Mammary epithelial cell (primary cell): ENCODE measurements at regions of chr3 and their contacts with region 1.

Region 1: GRCh38 chr3:33096093-33096868 is 665 bp downstream of the GLB1 start:
- DNase-seq: peak; percentile 48
- H3K4me3 ChIP-seq: peak overlapping the region; percentile 81 to 89 (median 84)
- H3K27ac ChIP-seq: peak overlapping the region; percentile 84
- H3K4me1 ChIP-seq: peaks cover 19% of the 10 kb centered on the region
- H3K27me3 ChIP-seq: no peaks in the 10 kb centered on the region
- CTCF ChIP-seq: no peak

Region 2: GRCh38 chr3:33113772-33114621 is 17.7 kb after region 1 on chr3 and contains the start of gene CRTAP:
- CTCF ChIA-PET with region 1: no interaction called
- dilution Hi-C with region 1: no loop called
- in situ Hi-C with region 1: no loop called
- intact Hi-C with region 1: loop called (anchors 1 kb)
- DNase-seq: peak; percentile 95
- H3K4me3 ChIP-seq: peak within 1 kb of the TSS; percentile 52 to 82 (median 79)
- H3K27ac ChIP-seq: peak within 1 kb of the TSS; percentile 70
- H3K4me1 ChIP-seq: no peaks in the 10 kb centered on the region
- H3K27me3 ChIP-seq: no peaks in the 10 kb centered on the region
- CTCF ChIP-seq: no peak
- total RNA-seq, gene CRTAP: 109 to 171 TPM

Region 3: DNA sequence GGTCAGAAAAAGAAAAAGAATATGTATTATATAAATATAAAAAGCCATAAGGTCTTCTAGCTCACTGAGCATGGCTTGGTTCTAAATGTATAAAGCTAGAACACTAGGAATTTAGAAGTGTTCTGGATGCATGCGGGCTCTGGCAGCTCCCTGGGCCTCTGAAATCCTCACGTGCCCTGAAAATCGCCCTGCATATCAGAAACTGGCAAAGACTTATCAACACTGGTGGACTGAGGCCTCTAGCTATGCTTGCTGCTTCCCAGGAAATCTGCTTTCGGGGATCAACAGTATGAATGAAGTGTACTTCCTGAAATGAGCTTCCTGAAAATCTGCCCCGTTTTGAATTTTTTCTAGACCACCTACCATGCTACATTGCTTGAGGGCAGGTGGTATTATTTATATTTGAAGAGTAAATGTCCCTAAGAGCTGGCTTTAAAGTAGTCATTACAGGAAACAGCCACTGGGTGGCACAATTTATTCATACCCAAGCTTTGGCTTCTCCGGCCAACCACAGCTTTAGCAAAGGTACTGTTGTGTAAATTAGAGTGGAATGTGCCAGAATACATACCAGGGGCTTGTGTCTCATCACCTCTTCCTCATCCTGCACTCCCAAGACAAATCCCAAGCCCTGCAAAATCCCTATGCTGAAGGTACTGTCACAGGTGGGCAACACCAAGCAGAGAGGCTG is 35.2 kb after region 1 on chr3:
- CTCF ChIA-PET with region 1: no interaction called
- dilution Hi-C with region 1: no loop called
- in situ Hi-C with region 1: no loop called
- intact Hi-C with region 1: no loop called
- DNase-seq: peak; percentile 52
- H3K4me3 ChIP-seq: no peak overlapping the region
- H3K27ac ChIP-seq: no peak overlapping the region
- H3K4me1 ChIP-seq: no peaks in the 10 kb centered on the region
- H3K27me3 ChIP-seq: no peaks in the 10 kb centered on the region
- CTCF ChIP-seq: peak; percentile 52 to 71

Region 4: GRCh38 chr3:33456756-33457155 is 360.5 kb after region 1 on chr3:
- CTCF ChIA-PET with region 1: no interaction called
- dilution Hi-C with region 1: no loop called
- in situ Hi-C with region 1: no loop called
- intact Hi-C with region 1: no loop called
- DNase-seq: no peak
- H3K4me3 ChIP-seq: no peak overlapping the region
- H3K27ac ChIP-seq: no peak overlapping the region
- H3K4me1 ChIP-seq: no peaks in the 10 kb centered on the region
- H3K27me3 ChIP-seq: no peaks in the 10 kb centered on the region
- CTCF ChIP-seq: no peak